ENCODE measurements at regions of chr1 and their contacts with region 1.

Region 1: DNA sequence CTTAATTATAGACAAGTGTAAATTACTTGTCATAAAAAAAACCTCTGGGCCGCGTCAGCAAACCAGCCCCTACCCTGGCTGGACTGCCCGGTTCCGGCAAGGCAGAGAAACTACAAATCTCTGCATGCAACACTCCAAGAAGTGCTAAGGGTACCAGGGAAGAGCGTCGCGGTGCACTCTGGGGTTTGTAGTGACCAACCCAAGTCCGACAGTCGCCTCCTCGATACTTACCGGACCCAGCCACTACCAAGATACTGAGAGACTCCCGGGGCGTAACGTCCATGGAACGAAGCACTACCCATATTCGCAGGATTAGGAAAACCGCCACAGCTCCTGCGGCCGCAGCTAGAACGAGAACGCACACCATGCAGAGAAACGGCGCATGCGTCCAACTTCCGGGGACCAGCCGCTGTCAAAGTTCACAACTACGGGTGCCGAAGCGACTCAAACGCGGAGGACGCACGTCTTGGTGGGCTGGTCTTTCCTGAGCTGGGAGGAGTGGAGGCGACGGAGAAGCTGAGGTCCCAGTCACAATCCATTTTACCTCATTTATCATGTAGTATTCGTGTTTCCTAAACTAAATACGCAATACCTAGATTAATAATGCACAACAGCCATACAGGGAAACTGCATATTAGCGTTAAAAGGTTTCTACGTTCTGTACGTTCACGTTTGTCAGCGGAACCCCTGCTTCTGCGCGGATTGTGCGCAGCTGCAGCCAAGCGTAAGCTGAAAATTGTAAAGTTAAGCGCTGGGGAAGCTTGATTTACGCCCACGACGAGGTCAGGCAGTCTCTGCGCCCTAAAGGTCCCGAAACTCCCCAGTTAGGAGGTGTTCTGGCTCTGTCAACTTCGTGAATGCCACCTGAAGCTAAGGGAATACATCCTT is at the start of gene ALG14:
- DNase-seq: peak; percentile 81 to 96 (median 95)
- ATAC-seq: peak; percentile 96
- H3K4me3 ChIP-seq: peak within 1 kb of the TSS; percentile 96
- H3K4me3 Mint-ChIP-seq: peak within 1 kb of the TSS; percentile 88 to 100 (median 98)
- H3K27ac ChIP-seq: peak within 1 kb of the TSS; percentile 85
- H3K27ac Mint-ChIP-seq: peak within 1 kb of the TSS; percentile 95 to 100 (median 97)
- H3K4me1 ChIP-seq: peaks cover 8 to 12% of the 10 kb centered on the region in 2 donors
- H3K4me1 Mint-ChIP-seq: peaks cover 10 to 26% (median 18%) of the 10 kb centered on the region in 7 donors
- H3K27me3 ChIP-seq: no peaks in the 10 kb centered on the region
- H3K27me3 Mint-ChIP-seq: peaks cover 0 to 6% (median 0%) of the 10 kb centered on the region in 5 donors
- total RNA-seq, gene ALG14: 1.1 to 2.2 (median 1.5) TPM

Region 2: GRCh38 chr1:93846211-93846991 is 1226.4 kb before region 1 on chr1:
- CTCF ChIA-PET with region 1: no interaction called
- POLR2A ChIA-PET with region 1: interaction called, 10 read pairs
- intact Hi-C with region 1: loop called in 1 of 2 experiments (anchors 2 kb)
- DNase-seq: peak; percentile 78 to 91 (median 89)
- ATAC-seq: peak; percentile 71
- H3K4me3 ChIP-seq: peak overlapping the region; percentile 90
- H3K4me3 Mint-ChIP-seq: peak overlapping the region; percentile 86 to 97 (median 91)
- H3K27ac ChIP-seq: peak overlapping the region; percentile 88
- H3K27ac Mint-ChIP-seq: peak overlapping the region; percentile 86 to 100 (median 96)
- H3K4me1 ChIP-seq: peaks cover 4 to 16% of the 10 kb centered on the region in 2 donors
- H3K4me1 Mint-ChIP-seq: peaks cover 15 to 36% (median 24%) of the 10 kb centered on the region in 7 donors
- H3K27me3 ChIP-seq: no peaks in the 10 kb centered on the region
- H3K27me3 Mint-ChIP-seq: peaks cover 0 to 13% (median 0%) of the 10 kb centered on the region in 5 donors

Region 3: GRCh38 chr1:94417978-94418663 is 654.7 kb before region 1 on chr1 and contains the start of gene ABCD3:
- CTCF ChIA-PET with region 1: no interaction called
- POLR2A ChIA-PET with region 1: interaction called, 5 read pairs
- intact Hi-C with region 1: loop called (anchors 1 kb)
- DNase-seq: peak; percentile 97 to 99 (median 99)
- ATAC-seq: peak; percentile 97
- H3K4me3 ChIP-seq: peak within 1 kb of the TSS; percentile 79
- H3K4me3 Mint-ChIP-seq: no peak within 1 kb of the TSS
- H3K27ac ChIP-seq: peak within 1 kb of the TSS; percentile 76
- H3K27ac Mint-ChIP-seq: peak within 1 kb of the TSS in 7 of 9 donors; percentile 68 to 91 (median 83)
- H3K4me1 ChIP-seq: peaks cover 10 to 15% of the 10 kb centered on the region in 2 donors
- H3K4me1 Mint-ChIP-seq: peaks cover 25 to 42% (median 40%) of the 10 kb centered on the region in 7 donors
- H3K27me3 ChIP-seq: no peaks in the 10 kb centered on the region
- H3K27me3 Mint-ChIP-seq: peaks cover 0 to 16% (median 0%) of the 10 kb centered on the region in 5 donors
- total RNA-seq, gene ABCD3: 18.0 to 31.2 (median 25.0) TPM

Region 4: GRCh38 chr1:94962409-94963265 is 110.1 kb before region 1 on chr1:
- CTCF ChIA-PET with region 1: no interaction called
- POLR2A ChIA-PET with region 1: no interaction called
- intact Hi-C with region 1: loop called (anchors 2 kb)
- DNase-seq: peak in 7 of 9 donors; percentile 21 to 41 (median 35)
- ATAC-seq: peak; percentile 73
- H3K4me3 ChIP-seq: peak overlapping the region; percentile 53
- H3K4me3 Mint-ChIP-seq: peak overlapping the region; percentile 82 to 99 (median 90)
- H3K27ac ChIP-seq: peak overlapping the region; percentile 68
- H3K27ac Mint-ChIP-seq: peak overlapping the region; percentile 87 to 99 (median 96)
- H3K4me1 ChIP-seq: peaks cover 0 to 18% of the 10 kb centered on the region in 2 donors
- H3K4me1 Mint-ChIP-seq: peaks cover 0 to 31% (median 15%) of the 10 kb centered on the region in 7 donors
- H3K27me3 ChIP-seq: no peaks in the 10 kb centered on the region
- H3K27me3 Mint-ChIP-seq: no peaks in the 10 kb centered on the region

Region 5: DNA sequence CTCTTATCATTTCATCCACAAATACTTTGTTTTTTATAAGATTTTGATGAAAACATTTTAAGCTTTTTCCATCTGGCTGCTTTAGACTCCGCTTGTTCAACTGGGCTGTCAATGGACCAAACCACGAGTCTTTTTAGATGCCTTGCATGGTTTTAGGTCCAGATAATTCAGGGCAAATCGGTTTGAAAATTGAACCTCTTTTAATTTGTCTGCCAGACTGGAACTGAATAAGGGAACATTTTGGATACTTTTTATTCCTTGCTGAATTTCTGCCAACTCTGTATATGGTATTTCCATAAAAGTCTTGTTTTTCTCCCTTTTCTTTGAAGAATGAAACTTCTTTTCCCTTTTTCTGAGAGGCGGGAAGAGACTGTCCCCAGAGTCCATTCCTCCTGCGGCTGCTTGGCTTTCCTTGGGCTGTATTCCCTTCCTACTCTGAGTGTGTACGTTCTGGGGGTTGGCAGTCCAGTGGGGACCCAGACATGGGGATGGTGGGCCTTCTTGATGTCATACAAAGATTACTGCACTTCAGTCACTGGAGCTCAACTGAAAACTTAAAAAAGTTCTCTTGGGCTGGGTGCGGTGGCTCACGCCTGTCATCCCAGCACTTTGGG is 99.4 kb before region 1 on chr1:
- CTCF ChIA-PET with region 1: no interaction called
- POLR2A ChIA-PET with region 1: no interaction called
- intact Hi-C with region 1: no loop called
- DNase-seq: no peak
- ATAC-seq: no peak
- H3K4me3 ChIP-seq: no peak overlapping the region
- H3K4me3 Mint-ChIP-seq: no peak overlapping the region
- H3K27ac ChIP-seq: no peak overlapping the region
- H3K27ac Mint-ChIP-seq: peak overlapping the region in 1 of 9 donors; percentile 46
- H3K4me1 ChIP-seq: no peaks in the 10 kb centered on the region
- H3K4me1 Mint-ChIP-seq: no peaks in the 10 kb centered on the region
- H3K27me3 ChIP-seq: no peaks in the 10 kb centered on the region
- H3K27me3 Mint-ChIP-seq: no peaks in the 10 kb centered on the region

Region 6: DNA sequence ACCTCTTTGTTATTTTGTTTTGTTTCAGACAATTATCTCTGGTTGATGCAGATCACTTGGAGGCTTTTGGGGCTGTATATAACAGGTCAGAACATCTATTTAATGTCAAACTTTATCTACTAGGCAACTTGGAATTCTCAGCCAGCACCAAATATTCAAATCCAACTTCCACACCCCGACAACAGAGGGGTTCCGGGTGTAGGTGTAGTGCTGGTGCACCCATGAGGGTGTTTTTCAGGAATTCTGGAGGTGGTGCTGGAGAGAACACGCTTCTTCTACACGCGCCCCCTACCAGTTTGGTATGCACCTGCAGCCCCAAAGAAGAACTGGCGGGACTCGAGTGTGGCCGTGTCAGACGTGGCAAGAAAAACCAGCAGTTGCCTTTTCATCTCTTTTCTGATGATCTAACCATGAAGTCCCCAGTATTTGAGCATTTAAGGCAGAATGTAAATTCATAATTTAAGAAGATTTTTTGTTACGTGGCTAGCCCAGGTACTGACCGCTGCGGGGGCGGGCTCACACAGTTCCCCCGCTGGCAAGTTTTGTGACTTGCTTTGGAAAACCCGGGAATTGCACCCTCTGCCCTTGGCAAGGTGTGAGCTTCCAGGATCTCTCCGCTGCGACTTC is 43.9 kb after region 1 on chr1:
- CTCF ChIA-PET with region 1: no interaction called
- POLR2A ChIA-PET with region 1: no interaction called
- intact Hi-C with region 1: loop called (anchors 1 to 2 kb)
- DNase-seq: peak; percentile 8 to 53 (median 44)
- ATAC-seq: peak; percentile 77
- H3K4me3 ChIP-seq: peak overlapping the region; percentile 57
- H3K4me3 Mint-ChIP-seq: peak overlapping the region; percentile 73 to 97 (median 91)
- H3K27ac ChIP-seq: no peak overlapping the region
- H3K27ac Mint-ChIP-seq: peak overlapping the region in 3 of 9 donors; percentile 5 to 86 (median 33)
- H3K4me1 ChIP-seq: peaks cover 4% of the 10 kb centered on the region in 2 donors
- H3K4me1 Mint-ChIP-seq: peaks cover 0 to 14% (median 9%) of the 10 kb centered on the region in 7 donors
- H3K27me3 ChIP-seq: peaks cover 0 to 3% of the 10 kb centered on the region in 2 donors
- H3K27me3 Mint-ChIP-seq: peaks cover 21 to 67% (median 52%) of the 10 kb centered on the region in 5 donors

Region 7: GRCh38 chr1:95332754-95333153 is 260.0 kb after region 1 on chr1:
- CTCF ChIA-PET with region 1: no interaction called
- POLR2A ChIA-PET with region 1: no interaction called
- intact Hi-C with region 1: no loop called
- DNase-seq: no peak
- ATAC-seq: no peak
- H3K4me3 ChIP-seq: no peak overlapping the region
- H3K4me3 Mint-ChIP-seq: no peak overlapping the region
- H3K27ac ChIP-seq: no peak overlapping the region
- H3K27ac Mint-ChIP-seq: no peak overlapping the region
- H3K4me1 ChIP-seq: no peaks in the 10 kb centered on the region
- H3K4me1 Mint-ChIP-seq: no peaks in the 10 kb centered on the region
- H3K27me3 ChIP-seq: no peaks in the 10 kb centered on the region
- H3K27me3 Mint-ChIP-seq: peaks cover 0 to 5% (median 0%) of the 10 kb centered on the region in 5 donors

Measured in naive thymus-derived CD4-positive, alpha-beta T cell (primary cell).